ENCODE measurements at regions of chr20 and their contacts with region 1.

Region 1: DNA sequence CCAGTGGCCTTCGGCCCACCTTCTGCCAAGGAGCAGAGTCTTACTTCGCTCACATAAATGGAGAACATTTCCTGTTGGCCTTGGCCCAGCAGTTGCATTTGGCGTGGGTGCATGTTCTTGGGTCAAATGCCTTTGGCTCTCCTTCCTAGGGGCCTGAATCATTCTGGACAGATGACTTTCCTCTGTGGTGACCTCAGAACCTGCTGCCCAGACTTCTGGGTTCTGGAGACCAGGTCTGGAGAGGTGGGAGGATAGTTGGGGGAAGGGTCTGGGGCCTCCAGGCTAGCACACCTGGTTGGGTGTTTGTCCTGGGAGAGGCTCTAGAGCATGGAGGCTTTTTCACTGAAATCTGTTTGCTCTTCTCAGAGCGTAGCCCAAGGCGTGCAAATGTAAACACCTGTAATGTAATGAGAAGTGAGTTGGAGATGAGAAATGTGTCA is 29.4 kb downstream of the BCAS4 start:
- DNase-seq: no peak
- CTCF ChIP-seq: no peak

Region 2: GRCh38 chr20:50834599-50835005 is 10.4 kb after region 1 on chr20:
- CTCF ChIA-PET with region 1: interaction called, 11 read pairs
- POLR2A ChIA-PET with region 1: interaction called, 3 read pairs
- DNase-seq: no peak
- CTCF ChIP-seq: no peak

Measured in GM10248 (cell line).